CD8-positive, alpha-beta T cell (primary cell): ENCODE measurements at regions of chr4 and their contacts with region 1.

Region 1: GRCh38 chr4:112099701-112100297 is 45.5 kb upstream of the FAM241A start:
- DNase-seq: peak in 2 of 9 experiments; percentile 54 to 65
- ATAC-seq: peak; percentile 75
- H3K4me3 ChIP-seq: no peak overlapping the region
- H3K4me3 Mint-ChIP-seq: no peak overlapping the region
- H3K27ac ChIP-seq: no peak overlapping the region
- H3K27ac Mint-ChIP-seq: no peak overlapping the region
- H3K4me1 ChIP-seq: no peaks in the 10 kb centered on the region
- H3K4me1 Mint-ChIP-seq: no peaks in the 10 kb centered on the region
- H3K27me3 ChIP-seq: no peaks in the 10 kb centered on the region
- H3K27me3 Mint-ChIP-seq: peaks cover 2% of the 10 kb centered on the region
- CTCF ChIP-seq: peak; percentile 76

Region 2: DNA sequence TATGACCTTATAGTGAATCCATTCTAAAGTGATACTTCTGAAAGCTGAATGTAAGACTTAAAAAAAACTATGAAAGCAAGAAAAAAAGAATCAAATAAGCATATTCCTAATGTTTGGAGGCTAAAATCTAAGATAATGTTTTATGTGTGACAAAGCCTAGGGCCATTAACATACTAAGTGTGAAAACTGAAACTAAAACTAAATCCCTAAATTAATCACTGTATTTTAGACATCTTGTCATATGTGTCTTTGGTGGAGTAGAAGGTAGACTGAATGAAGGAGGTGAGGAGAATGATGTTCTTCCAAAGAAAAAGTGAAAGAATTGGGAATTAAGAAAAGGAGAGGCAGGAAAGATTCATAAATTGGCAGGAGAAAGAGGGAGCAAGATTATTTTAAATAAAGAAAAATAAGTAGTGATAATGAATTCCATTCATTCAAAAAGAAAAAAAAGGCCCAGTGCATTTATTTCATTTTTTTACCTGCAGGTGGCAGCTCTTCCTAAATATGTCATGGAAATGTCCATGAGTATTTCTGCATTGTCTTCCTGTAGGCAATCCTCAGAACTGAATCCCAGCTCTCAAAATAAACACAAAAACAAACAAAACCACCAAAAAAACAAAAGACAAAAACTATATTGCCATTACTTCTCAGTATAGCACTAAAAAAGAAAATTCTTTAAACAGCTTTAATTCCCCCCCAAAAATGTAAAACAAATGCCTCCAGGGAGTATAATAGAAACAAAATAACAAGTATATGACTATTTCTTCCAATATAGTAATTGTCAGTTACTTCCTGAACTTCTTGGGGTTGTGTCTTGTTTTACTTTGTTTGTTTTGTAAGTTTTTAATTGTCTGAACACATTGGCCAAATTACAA is 114.8 kb after region 1 on chr4:
- CTCF ChIA-PET with region 1: interaction called, 6 read pairs
- POLR2A ChIA-PET with region 1: no interaction called
- intact Hi-C with region 1: loop called in 1 of 2 experiments (anchors 1 kb)
- DNase-seq: peak in 2 of 9 experiments; percentile 36 to 54
- ATAC-seq: no peak
- H3K4me3 ChIP-seq: no peak overlapping the region
- H3K4me3 Mint-ChIP-seq: no peak overlapping the region
- H3K27ac ChIP-seq: no peak overlapping the region
- H3K27ac Mint-ChIP-seq: no peak overlapping the region
- H3K4me1 ChIP-seq: no peaks in the 10 kb centered on the region
- H3K4me1 Mint-ChIP-seq: no peaks in the 10 kb centered on the region
- H3K27me3 ChIP-seq: no peaks in the 10 kb centered on the region
- H3K27me3 Mint-ChIP-seq: no peaks in the 10 kb centered on the region
- CTCF ChIP-seq: peak; percentile 51

Region 3: DNA sequence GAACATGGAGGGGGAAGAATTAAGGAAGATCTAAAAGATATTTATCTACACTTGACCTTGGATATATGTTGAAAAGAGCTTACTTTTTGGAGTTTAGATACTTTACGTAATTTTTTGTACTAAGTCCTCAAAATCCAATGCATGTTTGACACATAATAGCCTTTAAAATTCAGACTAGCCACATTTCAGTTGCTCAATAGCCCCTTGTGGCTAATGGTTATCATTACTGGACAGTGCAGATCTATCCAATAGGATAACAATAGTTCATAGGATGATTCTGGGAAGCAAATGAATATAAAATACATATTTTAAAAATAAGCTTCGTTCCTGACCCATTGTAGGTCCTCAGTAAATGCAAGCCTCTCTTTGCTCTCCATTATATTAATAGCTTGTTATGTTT is 145.6 kb after region 1 on chr4:
- CTCF ChIA-PET with region 1: interaction called, 51 read pairs
- POLR2A ChIA-PET with region 1: no interaction called
- intact Hi-C with region 1: no loop called
- DNase-seq: no peak
- ATAC-seq: no peak
- H3K4me3 ChIP-seq: no peak overlapping the region
- H3K4me3 Mint-ChIP-seq: no peak overlapping the region
- H3K27ac ChIP-seq: no peak overlapping the region
- H3K27ac Mint-ChIP-seq: no peak overlapping the region
- H3K4me1 ChIP-seq: no peaks in the 10 kb centered on the region
- H3K4me1 Mint-ChIP-seq: peaks cover 18% of the 10 kb centered on the region
- H3K27me3 ChIP-seq: no peaks in the 10 kb centered on the region
- H3K27me3 Mint-ChIP-seq: no peaks in the 10 kb centered on the region
- CTCF ChIP-seq: no peak

Region 4: GRCh38 chr4:112312610-112313239 is 212.9 kb after region 1 on chr4:
- CTCF ChIA-PET with region 1: interaction called, 16 read pairs
- POLR2A ChIA-PET with region 1: no interaction called
- intact Hi-C with region 1: no loop called
- DNase-seq: no peak
- ATAC-seq: no peak
- H3K4me3 ChIP-seq: no peak overlapping the region
- H3K4me3 Mint-ChIP-seq: no peak overlapping the region
- H3K27ac ChIP-seq: no peak overlapping the region
- H3K27ac Mint-ChIP-seq: no peak overlapping the region
- H3K4me1 ChIP-seq: no peaks in the 10 kb centered on the region
- H3K4me1 Mint-ChIP-seq: peaks cover 18% of the 10 kb centered on the region
- H3K27me3 ChIP-seq: no peaks in the 10 kb centered on the region
- H3K27me3 Mint-ChIP-seq: no peaks in the 10 kb centered on the region
- CTCF ChIP-seq: no peak

Region 5: DNA sequence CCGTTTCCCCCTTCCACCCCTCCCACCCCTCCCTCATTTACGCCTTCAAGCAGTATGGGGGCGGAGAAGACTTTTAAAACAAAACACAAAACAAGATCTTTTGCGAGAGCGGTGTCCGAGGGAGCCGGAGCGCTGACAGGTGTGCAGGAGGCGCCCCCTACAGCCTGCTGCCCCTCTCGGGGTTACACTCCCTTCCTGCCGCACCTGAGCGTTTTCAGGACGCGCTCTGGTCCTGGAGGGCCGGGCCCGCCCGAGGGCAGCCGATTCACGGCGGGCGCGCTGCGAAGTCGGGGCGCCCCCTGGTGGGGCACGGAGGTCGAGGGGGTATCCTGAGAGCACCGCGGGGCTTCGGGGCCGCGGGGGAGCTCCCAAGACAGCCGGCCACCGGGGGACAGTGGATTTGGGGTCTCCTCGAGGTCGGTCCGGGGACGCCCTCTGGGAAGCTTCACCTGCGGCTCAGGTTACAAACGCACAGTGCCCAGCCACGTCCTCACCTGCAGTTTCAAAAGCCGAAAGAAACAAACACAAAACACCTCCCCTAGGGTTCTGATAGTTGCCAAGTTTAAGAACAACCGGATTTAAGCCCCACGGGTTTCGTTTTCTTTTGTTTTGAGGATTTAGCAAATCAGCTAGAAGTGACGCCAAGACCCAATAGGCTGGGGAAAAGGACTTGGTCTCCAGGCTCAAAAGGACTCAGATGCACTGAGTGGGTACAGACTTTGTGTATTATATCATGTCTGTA is 424.1 kb after region 1 on chr4:
- CTCF ChIA-PET with region 1: interaction called, 18 read pairs
- POLR2A ChIA-PET with region 1: no interaction called
- intact Hi-C with region 1: loop called (anchors 1 kb)
- DNase-seq: peak; percentile 54 to 88 (median 73)
- ATAC-seq: peak; percentile 83
- H3K4me3 ChIP-seq: peak overlapping the region; percentile 31 to 42
- H3K4me3 Mint-ChIP-seq: peak overlapping the region; percentile 82
- H3K27ac ChIP-seq: no peak overlapping the region
- H3K27ac Mint-ChIP-seq: no peak overlapping the region
- H3K4me1 ChIP-seq: peaks cover 18% of the 10 kb centered on the region
- H3K4me1 Mint-ChIP-seq: peaks cover 33% of the 10 kb centered on the region
- H3K27me3 ChIP-seq: peaks cover 33 to 37% of the 10 kb centered on the region in 2 experiments
- H3K27me3 Mint-ChIP-seq: peaks cover 44% of the 10 kb centered on the region
- CTCF ChIP-seq: peak; percentile 76

Region 6: DNA sequence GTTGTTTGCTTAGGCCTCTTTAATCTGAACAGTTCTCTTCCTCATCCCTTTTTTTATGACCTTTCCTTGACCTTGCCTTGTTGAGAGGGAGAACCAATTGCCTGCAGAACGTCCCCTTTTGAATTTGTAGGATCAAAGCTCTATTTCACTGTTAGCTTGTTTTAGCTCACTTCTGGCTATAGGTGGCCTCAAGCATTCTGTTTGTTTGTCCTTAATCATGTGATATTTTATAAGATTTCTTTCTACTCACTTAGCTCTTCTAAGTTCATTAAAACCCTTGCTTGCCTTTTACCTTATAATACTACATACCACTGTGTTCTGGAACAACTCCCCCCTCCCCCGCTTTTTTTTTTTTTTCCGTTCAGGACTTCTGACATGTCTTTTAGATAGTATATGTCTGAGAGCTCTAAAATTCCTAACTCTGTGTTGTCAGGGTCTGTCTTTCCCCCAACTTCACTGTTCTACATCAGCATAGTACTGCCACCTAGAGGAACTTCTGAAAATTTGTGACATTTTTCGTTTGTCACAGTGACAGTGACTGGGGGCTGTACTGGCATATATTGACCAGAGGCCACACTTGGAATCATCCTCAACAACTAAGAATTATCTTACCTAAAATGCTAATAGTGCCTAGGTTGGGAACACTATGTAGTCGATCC is 665.6 kb after region 1 on chr4:
- CTCF ChIA-PET with region 1: no interaction called
- POLR2A ChIA-PET with region 1: no interaction called
- intact Hi-C with region 1: loop called (anchors 1 to 10 kb)
- DNase-seq: peak in 2 of 9 experiments; percentile 18 to 32
- ATAC-seq: no peak
- H3K4me3 ChIP-seq: no peak overlapping the region
- H3K4me3 Mint-ChIP-seq: no peak overlapping the region
- H3K27ac ChIP-seq: no peak overlapping the region
- H3K27ac Mint-ChIP-seq: no peak overlapping the region
- H3K4me1 ChIP-seq: no peaks in the 10 kb centered on the region
- H3K4me1 Mint-ChIP-seq: no peaks in the 10 kb centered on the region
- H3K27me3 ChIP-seq: no peaks in the 10 kb centered on the region
- H3K27me3 Mint-ChIP-seq: peaks cover 9% of the 10 kb centered on the region
- CTCF ChIP-seq: peak; percentile 42